CD4-positive, alpha-beta memory T cell (primary cell): ENCODE measurements at regions of chr13 and their contacts with region 1.

Region 1: DNA sequence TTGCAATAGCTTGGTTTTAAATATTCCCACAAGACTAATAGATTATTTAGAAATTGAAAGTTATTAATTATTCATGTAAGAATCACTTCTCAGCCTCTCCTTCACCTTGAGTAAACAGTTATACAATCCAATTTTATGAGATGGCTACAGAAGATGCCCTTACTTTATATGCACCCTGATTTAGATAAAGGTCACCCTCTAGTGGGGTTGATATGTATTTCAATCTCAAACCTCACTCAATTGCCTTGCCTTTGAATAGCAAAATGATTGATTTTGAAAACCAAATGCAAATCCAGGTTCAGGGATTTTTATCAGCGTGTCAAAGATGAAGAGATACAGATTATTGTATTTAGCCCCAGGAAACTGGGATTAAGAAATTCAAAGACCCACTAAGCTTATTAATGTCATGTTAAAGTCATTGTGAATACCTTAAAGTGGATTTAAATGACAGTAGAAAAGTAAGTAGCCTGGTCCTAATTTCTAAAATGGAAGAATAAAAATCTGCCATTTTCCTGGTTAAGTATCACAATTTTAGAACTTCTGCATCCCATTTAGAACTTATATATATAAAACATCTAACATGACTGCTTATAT is 305.1 kb downstream of the ITGBL1 start:
- DNase-seq: peak in 4 of 5 donors; percentile 22 to 35 (median 30)
- H3K4me3 ChIP-seq: no peak overlapping the region
- H3K4me3 Mint-ChIP-seq: no peak overlapping the region
- H3K27ac ChIP-seq: no peak overlapping the region
- H3K27ac Mint-ChIP-seq: no peak overlapping the region
- H3K4me1 ChIP-seq: no peaks in the 10 kb centered on the region
- H3K4me1 Mint-ChIP-seq: no peaks in the 10 kb centered on the region
- H3K27me3 ChIP-seq: no peaks in the 10 kb centered on the region
- H3K27me3 Mint-ChIP-seq: peaks cover 11 to 14% of the 10 kb centered on the region in 2 donors

Region 2: DNA sequence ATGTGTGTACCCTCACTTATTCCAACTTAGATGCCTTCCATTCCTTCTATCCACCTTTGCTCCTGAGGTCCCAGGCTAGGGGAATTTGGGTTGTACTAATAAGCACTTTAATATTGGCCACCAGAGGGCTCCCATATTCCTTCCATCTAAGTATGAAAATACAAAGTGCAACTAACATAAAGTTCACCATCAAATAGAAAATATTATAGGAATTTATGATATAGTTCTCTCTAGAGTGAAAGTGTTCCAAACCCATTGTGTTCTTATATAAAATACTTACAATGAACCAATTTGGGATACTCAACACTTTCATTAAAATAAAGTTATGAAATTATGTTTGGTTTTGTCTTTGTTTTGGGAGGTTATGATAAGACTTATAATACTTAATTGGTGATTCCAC is 242.8 kb before region 1 on chr13:
- CTCF ChIA-PET with region 1: interaction called, 24 read pairs
- POLR2A ChIA-PET with region 1: interaction called, 3 read pairs
- intact Hi-C with region 1: loop called (anchors 1 kb)
- DNase-seq: peak in 4 of 5 donors; percentile 32 to 34 (median 32)
- H3K4me3 ChIP-seq: no peak overlapping the region
- H3K4me3 Mint-ChIP-seq: no peak overlapping the region
- H3K27ac ChIP-seq: no peak overlapping the region
- H3K27ac Mint-ChIP-seq: no peak overlapping the region
- H3K4me1 ChIP-seq: peaks cover 12% of the 10 kb centered on the region
- H3K4me1 Mint-ChIP-seq: peaks cover 7 to 13% (median 10%) of the 10 kb centered on the region in 4 donors
- H3K27me3 ChIP-seq: no peaks in the 10 kb centered on the region
- H3K27me3 Mint-ChIP-seq: peaks cover 0 to 2% of the 10 kb centered on the region in 2 donors

Region 3: GRCh38 chr13:101714195-101714594 is 43.3 kb before region 1 on chr13:
- CTCF ChIA-PET with region 1: no interaction called
- POLR2A ChIA-PET with region 1: no interaction called
- intact Hi-C with region 1: no loop called
- DNase-seq: no peak
- H3K4me3 ChIP-seq: no peak overlapping the region
- H3K4me3 Mint-ChIP-seq: no peak overlapping the region
- H3K27ac ChIP-seq: no peak overlapping the region
- H3K27ac Mint-ChIP-seq: no peak overlapping the region
- H3K4me1 ChIP-seq: no peaks in the 10 kb centered on the region
- H3K4me1 Mint-ChIP-seq: no peaks in the 10 kb centered on the region
- H3K27me3 ChIP-seq: no peaks in the 10 kb centered on the region
- H3K27me3 Mint-ChIP-seq: peaks cover 3 to 9% of the 10 kb centered on the region in 2 donors